Psoas muscle (tissue), 8 donors: ENCODE measurements at regions of chr22 and their contacts with region 1.

Region 1: GRCh38 chr22:37817705-37818408 is 5.3 kb upstream of the GALR3 start:
- DNase-seq: peak; percentile 86 to 91
- ATAC-seq: peak; percentile 90 to 97 (median 94)
- H3K4me3 ChIP-seq: peak overlapping the region; percentile 60
- H3K27ac ChIP-seq: no peak overlapping the region
- H3K4me1 ChIP-seq: peaks cover 13% of the 10 kb centered on the region
- H3K27me3 ChIP-seq: no peaks in the 10 kb centered on the region
- CTCF ChIP-seq: peak; percentile 98

Region 2: DNA sequence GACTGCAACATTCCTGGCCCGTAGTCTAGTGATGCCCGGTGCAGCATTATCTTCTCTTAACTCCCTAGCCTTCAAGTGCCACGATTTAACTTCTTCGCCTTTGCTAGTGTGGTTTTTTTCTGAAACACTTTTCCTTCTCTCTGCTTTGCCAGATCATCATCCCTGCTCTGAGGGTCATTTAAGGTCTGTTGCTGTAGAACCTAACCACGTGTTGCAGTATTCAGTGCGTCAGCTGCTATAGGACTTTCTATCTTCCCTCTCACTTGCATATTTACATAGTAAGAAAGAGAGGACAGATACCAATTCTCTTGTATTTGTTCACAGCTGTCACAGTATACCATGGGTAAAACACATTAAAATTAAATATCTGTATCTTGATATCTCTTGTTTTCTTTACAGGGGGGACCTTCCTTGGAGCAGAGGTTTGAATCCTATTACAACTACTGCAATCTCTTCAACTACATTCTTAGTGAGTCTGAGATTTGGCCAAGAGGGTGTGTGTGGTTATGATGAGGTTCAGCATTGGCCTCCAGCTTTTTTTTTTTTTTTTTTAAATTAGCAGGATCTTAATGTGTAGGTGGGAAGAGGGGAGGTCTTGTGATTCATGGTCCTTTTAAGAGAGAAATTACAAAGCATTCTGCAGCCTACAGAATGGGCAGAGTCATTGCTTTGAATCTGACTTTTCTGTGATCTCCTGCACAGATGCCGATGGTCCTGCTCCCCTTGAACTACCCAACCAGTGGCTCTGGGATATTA is 44.9 kb after region 1 on chr22:
- intact Hi-C with region 1: loop called (anchors 1 to 2 kb)
- DNase-seq: no peak
- ATAC-seq: peak in 1 of 4 donors; percentile 45
- H3K4me3 ChIP-seq: no peak overlapping the region
- H3K27ac ChIP-seq: peak overlapping the region; percentile 36
- H3K4me1 ChIP-seq: peaks cover 29% of the 10 kb centered on the region
- H3K27me3 ChIP-seq: no peaks in the 10 kb centered on the region
- CTCF ChIP-seq: no peak

Region 3: GRCh38 chr22:37887610-37888378 is 69.9 kb after region 1 on chr22:
- intact Hi-C with region 1: no loop called
- DNase-seq: peak in 1 of 2 donors; percentile 31
- ATAC-seq: peak in 3 of 4 donors; percentile 26 to 42 (median 42)
- H3K4me3 ChIP-seq: no peak overlapping the region
- H3K27ac ChIP-seq: no peak overlapping the region
- H3K4me1 ChIP-seq: peaks cover 4% of the 10 kb centered on the region
- H3K27me3 ChIP-seq: no peaks in the 10 kb centered on the region
- CTCF ChIP-seq: no peak

Region 4: GRCh38 chr22:37965940-37966664 is 148.2 kb after region 1 on chr22:
- intact Hi-C with region 1: loop called (anchors 5 to 10 kb)
- DNase-seq: no peak
- ATAC-seq: no peak
- H3K4me3 ChIP-seq: no peak overlapping the region
- H3K27ac ChIP-seq: no peak overlapping the region
- H3K4me1 ChIP-seq: peaks cover 9% of the 10 kb centered on the region
- H3K27me3 ChIP-seq: no peaks in the 10 kb centered on the region
- CTCF ChIP-seq: no peak